Heart left ventricle (tissue), 16 donors: ENCODE measurements at regions of chr13 and their contacts with region 1.

Region 1: GRCh38 chr13:31885994-31886393 is 145.6 kb upstream of the FRY start:
- DNase-seq: peak in 4 of 5 donors; percentile 32 to 58 (median 34)
- ATAC-seq: peak; percentile 41 to 77 (median 68)
- H3K4me3 ChIP-seq: no peak overlapping the region
- H3K27ac ChIP-seq: peak overlapping the region in 9 of 12 donors; percentile 47 to 79 (median 64)
- H3K4me1 ChIP-seq: peaks cover 2 to 85% (median 61%) of the 10 kb centered on the region in 12 donors
- H3K27me3 ChIP-seq: no peaks in the 10 kb centered on the region
- CTCF ChIP-seq: no peak
- POLR2A ChIP-seq: no peak

Region 2: GRCh38 chr13:31853643-31854326 is 32.2 kb before region 1 on chr13:
- intact Hi-C with region 1: loop called in 4 of 10 experiments (anchors 5 kb)
- DNase-seq: no peak
- ATAC-seq: no peak
- H3K4me3 ChIP-seq: no peak overlapping the region
- H3K27ac ChIP-seq: peak overlapping the region in 1 of 12 donors; percentile 14
- H3K4me1 ChIP-seq: peaks cover 0 to 35% (median 5%) of the 10 kb centered on the region in 12 donors
- H3K27me3 ChIP-seq: no peaks in the 10 kb centered on the region
- CTCF ChIP-seq: no peak
- POLR2A ChIP-seq: no peak